ENCODE measurements at regions of chr16 and their contacts with region 1.

Region 1: GRCh38 chr16:50210266-50211038 is 55.9 kb upstream of the ADCY7 start:
- DNase-seq: peak; percentile 85
- ATAC-seq: peak; percentile 91 to 97

Region 2: GRCh38 chr16:49986351-49987124 is 223.9 kb before region 1 on chr16:
- intact Hi-C with region 1: no loop called
- DNase-seq: peak; percentile 31
- ATAC-seq: peak in 1 of 2 donors; percentile 47

Region 3: GRCh38 chr16:50024684-50025536 is 185.5 kb before region 1 on chr16 and contains the start of gene CNEP1R1:
- intact Hi-C with region 1: loop called in 1 of 2 experiments (anchors 2 kb)
- DNase-seq: peak; percentile 94
- ATAC-seq: peak; percentile 100
- total RNA-seq, gene CNEP1R1: 16.2 to 17.1 TPM

Region 4: GRCh38 chr16:50065624-50066481 is 144.6 kb before region 1 on chr16 and contains the start of gene HEATR3:
- intact Hi-C with region 1: loop called in 1 of 2 experiments (anchors 5 kb)
- DNase-seq: peak; percentile 94
- ATAC-seq: peak; percentile 96 to 97
- total RNA-seq, gene HEATR3: 11.5 to 13.1 TPM

Region 5: GRCh38 chr16:50152807-50153452 is 57.5 kb before region 1 on chr16 and contains the start of gene TENT4B:
- intact Hi-C with region 1: loop called in 1 of 2 experiments (anchors 1 kb)
- DNase-seq: peak; percentile 90
- ATAC-seq: peak; percentile 94 to 95
- total RNA-seq, gene TENT4B: 5.5 to 7.1 TPM

Region 6: DNA sequence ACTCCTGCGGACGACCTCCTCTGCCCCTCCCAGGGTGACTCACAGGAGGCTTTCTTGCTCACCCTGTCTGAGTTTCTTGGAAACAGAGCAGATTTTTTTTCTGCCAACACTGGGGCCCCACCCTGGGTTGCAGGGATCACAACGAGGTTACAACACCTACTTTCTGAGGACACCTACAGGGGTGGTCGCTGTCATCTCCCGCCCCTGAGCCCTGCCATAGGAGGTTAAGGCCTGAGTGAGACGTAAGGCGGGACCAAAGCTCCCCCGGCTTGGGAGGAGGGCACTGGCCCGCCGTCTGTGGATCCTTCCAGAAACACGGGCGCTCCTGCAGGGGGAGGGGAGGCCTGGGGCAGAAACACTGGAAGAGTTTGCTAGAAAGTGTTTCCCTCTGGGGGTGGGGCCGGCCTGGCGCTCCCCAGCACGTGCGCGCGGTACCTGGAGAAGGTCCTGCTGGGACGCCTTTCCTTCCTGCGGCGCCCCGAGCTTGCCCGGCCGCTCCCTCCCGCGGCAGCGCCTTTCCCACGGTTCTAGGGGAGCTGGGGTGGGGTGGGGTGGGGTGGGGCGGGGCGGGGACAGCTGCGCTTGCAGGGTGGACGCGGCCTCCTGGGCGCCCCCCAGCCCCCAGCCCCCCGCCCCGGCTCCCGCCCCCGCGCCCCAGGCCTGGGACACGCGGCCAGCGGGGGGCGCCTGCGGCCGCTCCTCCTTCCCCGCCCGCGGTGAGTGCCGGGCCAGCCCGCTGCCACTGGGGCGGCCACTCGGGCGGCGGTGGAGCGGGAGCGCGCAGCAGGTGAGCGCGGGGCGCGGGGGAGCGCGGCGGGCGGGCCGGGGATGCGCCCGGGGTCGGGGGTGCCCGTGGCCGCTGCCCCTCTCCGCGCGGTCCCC is 35.2 kb after region 1 on chr16:
- intact Hi-C with region 1: no loop called
- DNase-seq: peak; percentile 60
- ATAC-seq: peak; percentile 87 to 91

Region 7: GRCh38 chr16:50665128-50665878 is 454.9 kb after region 1 on chr16:
- intact Hi-C with region 1: loop called in 1 of 2 experiments (anchors 10 kb)
- DNase-seq: peak; percentile 80
- ATAC-seq: peak; percentile 87 to 88

Measured in left cardiac atrium (tissue), 4 donors.